CD14-positive monocyte (primary cell): ENCODE measurements at regions of chr7 and their contacts with region 1.

Region 1: GRCh38 chr7:2870471-2870931 is 26.4 kb upstream of the GNA12 start:
- DNase-seq: peak; percentile 82 to 92 (median 89)
- H3K4me3 ChIP-seq: peak overlapping the region in 1 of 3 experiments; percentile 38
- H3K4me3 Mint-ChIP-seq: peak overlapping the region; percentile 63 to 89
- H3K27ac ChIP-seq: peak overlapping the region in 1 of 2 donors; percentile 44
- H3K27ac Mint-ChIP-seq: peak overlapping the region; percentile 42 to 94 (median 82)
- H3K4me1 ChIP-seq: peaks cover 14 to 15% of the 10 kb centered on the region in 2 donors
- H3K4me1 Mint-ChIP-seq: peaks cover 19% of the 10 kb centered on the region
- H3K27me3 ChIP-seq: peaks cover 0 to 8% of the 10 kb centered on the region in 2 donors
- H3K27me3 Mint-ChIP-seq: peaks cover 32 to 51% (median 49%) of the 10 kb centered on the region in 3 donors
- CTCF ChIP-seq: no peak

Region 2: DNA sequence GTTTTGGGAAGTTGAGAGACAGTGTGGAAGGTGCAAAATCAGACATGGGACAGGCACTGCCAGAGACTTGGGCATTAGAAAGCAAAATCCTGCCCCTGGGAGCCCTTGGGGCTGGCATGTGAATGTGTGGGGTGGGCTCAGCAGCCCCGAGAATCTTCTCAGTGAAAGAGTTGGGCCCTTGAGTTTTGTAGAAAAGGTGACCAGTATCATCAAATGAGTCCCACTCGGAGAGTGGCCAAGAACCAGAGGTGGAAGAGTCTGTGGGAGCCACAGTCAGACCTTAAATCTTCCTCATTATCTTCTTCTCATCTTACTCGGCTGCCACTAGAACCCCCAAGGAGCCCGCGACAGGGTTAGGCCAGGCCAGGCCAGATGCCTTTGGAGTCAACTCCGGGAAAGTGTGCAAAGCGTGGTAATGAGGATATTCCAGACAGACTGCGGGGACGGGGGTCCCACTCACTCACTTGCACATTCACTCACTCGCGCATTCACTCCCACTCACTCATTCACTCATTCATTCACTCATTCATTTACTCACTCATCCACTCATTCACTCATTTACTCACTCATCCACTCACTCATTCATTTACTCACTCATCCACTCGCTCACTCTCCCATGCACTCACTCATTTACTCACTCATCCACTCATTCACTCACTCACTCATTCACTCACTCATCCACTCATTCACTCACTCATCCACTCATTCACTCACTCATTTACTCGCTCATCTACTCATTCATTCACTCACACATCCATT is 98.3 kb after region 1 on chr7:
- intact Hi-C with region 1: loop called in 1 of 2 experiments (anchors 10 kb)
- DNase-seq: no peak
- H3K4me3 ChIP-seq: no peak overlapping the region
- H3K4me3 Mint-ChIP-seq: no peak overlapping the region
- H3K27ac ChIP-seq: no peak overlapping the region
- H3K27ac Mint-ChIP-seq: peak overlapping the region in 1 of 7 donors; percentile 27
- H3K4me1 ChIP-seq: no peaks in the 10 kb centered on the region
- H3K4me1 Mint-ChIP-seq: no peaks in the 10 kb centered on the region
- H3K27me3 ChIP-seq: no peaks in the 10 kb centered on the region
- H3K27me3 Mint-ChIP-seq: peaks cover 0 to 1% (median 0%) of the 10 kb centered on the region in 3 donors
- CTCF ChIP-seq: no peak

Region 3: GRCh38 chr7:3294432-3295100 is 424.1 kb after region 1 on chr7:
- intact Hi-C with region 1: loop called in 1 of 2 experiments (anchors 10 kb)
- DNase-seq: no peak
- H3K4me3 ChIP-seq: no peak overlapping the region
- H3K4me3 Mint-ChIP-seq: no peak overlapping the region
- H3K27ac ChIP-seq: no peak overlapping the region
- H3K27ac Mint-ChIP-seq: no peak overlapping the region
- H3K4me1 ChIP-seq: no peaks in the 10 kb centered on the region
- H3K4me1 Mint-ChIP-seq: no peaks in the 10 kb centered on the region
- H3K27me3 ChIP-seq: peaks cover 0 to 1% of the 10 kb centered on the region in 2 donors
- H3K27me3 Mint-ChIP-seq: peaks cover 14 to 22% (median 21%) of the 10 kb centered on the region in 3 donors
- CTCF ChIP-seq: no peak